ENCODE measurements at regions of chr21 and their contacts with region 1.

Region 1: GRCh38 chr21:31873696-31874599 is 1.1 kb downstream of the HUNK start:
- DNase-seq: peak in 1 of 2 donors; percentile 89
- H3K4me3 ChIP-seq: peak overlapping the region; percentile 26
- CTCF ChIP-seq: no peak
- POLR2A ChIP-seq: no peak

Region 2: GRCh38 chr21:31470896-31471694 is 402.9 kb before region 1 on chr21:
- intact Hi-C with region 1: no loop called
- DNase-seq: no peak
- H3K4me3 ChIP-seq: no peak overlapping the region
- CTCF ChIP-seq: no peak
- POLR2A ChIP-seq: no peak

Region 3: DNA sequence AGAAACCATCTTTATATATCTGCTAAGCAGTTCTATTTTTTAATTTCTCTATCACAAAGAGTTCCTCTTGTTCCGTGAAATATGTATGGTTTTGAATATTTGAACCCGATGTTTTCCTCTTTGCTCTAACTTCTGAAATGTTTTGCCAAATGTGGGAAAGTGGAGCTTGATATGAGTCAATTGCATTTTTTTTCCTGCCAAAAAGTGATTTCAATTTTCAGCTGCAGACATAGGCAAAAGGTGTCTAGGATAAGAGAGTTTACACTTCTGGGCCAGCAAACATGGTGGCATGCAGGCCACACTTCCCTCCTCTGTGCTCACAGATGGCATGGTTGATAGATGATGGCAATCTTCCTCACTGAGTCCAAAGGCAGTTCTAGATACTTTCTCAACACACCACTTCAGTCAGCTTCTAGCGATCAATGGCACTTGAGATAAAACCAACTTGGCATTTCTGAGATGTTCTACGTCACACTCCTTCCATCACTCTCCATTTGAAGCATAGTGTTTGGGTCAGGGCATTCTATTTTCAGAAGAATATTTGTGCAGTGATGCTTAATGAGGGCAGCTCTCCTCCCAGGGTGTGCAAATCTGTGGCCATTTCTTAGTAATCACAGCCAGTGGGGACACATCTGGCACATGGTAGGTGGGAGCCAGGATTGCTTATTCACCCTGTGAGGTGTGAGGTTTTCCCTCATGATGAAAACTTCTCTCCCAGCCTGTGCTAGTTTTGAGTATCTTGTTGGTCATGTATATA is 87.6 kb before region 1 on chr21:
- intact Hi-C with region 1: loop called (anchors 5 kb)
- DNase-seq: no peak
- H3K4me3 ChIP-seq: no peak overlapping the region
- CTCF ChIP-seq: no peak
- POLR2A ChIP-seq: no peak

Region 4: GRCh38 chr21:32120230-32120629 is 246.3 kb after region 1 on chr21:
- intact Hi-C with region 1: no loop called
- DNase-seq: no peak
- H3K4me3 ChIP-seq: no peak overlapping the region
- CTCF ChIP-seq: no peak
- POLR2A ChIP-seq: no peak